Right ventricle myocardium superior (tissue), 1 donor: ENCODE measurements at regions of chr6 and their contacts with region 1.

Region 1: DNA sequence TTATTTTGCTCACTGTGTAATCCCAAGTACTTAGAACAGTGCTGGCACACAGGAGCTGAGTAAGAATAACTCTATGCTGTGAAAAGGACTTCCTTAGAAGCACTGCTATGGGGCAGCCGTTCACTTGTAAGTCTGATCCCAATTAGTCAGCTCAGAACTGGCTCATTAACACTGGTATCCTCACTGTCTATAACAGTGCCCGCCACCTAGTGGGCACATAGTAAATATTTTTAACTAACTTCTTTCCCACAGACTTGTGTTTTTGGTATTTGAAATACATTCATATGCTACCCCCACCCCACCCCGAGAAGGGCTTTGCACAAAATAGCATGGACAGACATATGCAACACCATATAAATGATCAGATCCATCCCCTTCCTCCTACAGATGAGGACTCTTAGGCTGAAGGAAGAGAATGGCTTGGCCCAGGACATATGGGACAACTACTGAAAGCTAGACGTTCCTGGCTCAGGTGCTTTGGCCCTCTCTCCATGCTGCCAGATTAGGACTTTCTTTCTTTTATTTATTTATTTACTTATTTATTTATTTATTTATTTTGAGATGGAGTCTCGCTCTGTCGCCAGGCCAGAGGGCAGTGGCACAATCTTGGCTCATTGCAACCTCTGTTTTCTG is 47.1 kb downstream of the DST start:
- DNase-seq: no peak
- ATAC-seq: peak; percentile 71

Region 2: GRCh38 chr6:56359201-56359899 is 236.3 kb before region 1 on chr6:
- intact Hi-C with region 1: loop called (anchors 5 kb)
- DNase-seq: no peak
- ATAC-seq: peak; percentile 88

Region 3: GRCh38 chr6:56475736-56476457 is 119.7 kb before region 1 on chr6:
- intact Hi-C with region 1: loop called (anchors 10 kb)
- DNase-seq: peak; percentile 45
- ATAC-seq: peak; percentile 88

Region 4: DNA sequence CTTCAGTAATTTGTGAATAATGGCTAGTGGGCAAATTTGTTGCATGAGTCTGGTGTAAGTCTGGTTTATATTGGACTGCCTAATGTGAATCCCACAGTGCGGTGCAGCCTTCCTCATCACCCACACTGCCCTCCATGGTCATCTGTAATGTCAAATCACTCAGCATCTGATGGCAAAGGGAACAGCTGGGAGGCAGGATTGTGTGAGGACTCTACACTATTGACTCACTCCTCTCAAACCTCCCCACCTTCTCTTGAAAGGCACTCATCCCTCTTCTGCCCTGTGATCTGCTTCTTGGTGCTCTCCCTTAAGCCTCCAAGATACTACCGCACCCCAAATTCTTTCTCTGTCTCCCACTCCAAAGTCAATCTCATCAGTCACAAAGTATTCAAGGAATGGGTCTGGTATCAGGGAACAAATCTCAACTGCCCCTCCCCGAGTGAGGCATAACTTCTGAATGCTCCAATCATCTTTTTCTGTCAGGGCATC is 213.3 kb after region 1 on chr6:
- intact Hi-C with region 1: no loop called
- DNase-seq: no peak
- ATAC-seq: peak; percentile 66

Region 5: DNA sequence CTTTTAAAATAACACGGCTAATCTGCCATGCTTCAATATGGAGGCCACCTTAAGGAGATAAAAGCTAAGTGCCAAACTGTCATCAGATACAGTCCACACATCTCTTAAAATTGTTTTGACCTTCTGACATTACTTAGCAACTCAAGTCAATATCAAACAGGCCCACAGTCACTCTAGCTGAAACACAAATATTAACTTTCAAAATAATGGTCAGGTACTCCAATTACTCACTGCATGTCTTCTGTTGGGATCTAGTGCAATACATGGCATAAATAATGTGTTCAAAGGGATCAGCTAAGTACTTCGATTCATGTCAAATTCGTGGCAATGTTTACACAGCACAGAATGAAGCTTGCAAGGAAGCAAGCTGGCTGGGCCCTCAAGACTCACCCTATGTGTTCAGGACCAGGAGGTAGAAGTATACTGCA is 225.4 kb after region 1 on chr6:
- intact Hi-C with region 1: no loop called
- DNase-seq: no peak
- ATAC-seq: peak; percentile 40

Region 6: GRCh38 chr6:57303931-57304681 is 708.5 kb after region 1 on chr6:
- intact Hi-C with region 1: no loop called
- DNase-seq: no peak
- ATAC-seq: peak; percentile 90